GM10248 (cell line): ENCODE measurements at regions of chr3 and their contacts with region 1.

Region 1: DNA sequence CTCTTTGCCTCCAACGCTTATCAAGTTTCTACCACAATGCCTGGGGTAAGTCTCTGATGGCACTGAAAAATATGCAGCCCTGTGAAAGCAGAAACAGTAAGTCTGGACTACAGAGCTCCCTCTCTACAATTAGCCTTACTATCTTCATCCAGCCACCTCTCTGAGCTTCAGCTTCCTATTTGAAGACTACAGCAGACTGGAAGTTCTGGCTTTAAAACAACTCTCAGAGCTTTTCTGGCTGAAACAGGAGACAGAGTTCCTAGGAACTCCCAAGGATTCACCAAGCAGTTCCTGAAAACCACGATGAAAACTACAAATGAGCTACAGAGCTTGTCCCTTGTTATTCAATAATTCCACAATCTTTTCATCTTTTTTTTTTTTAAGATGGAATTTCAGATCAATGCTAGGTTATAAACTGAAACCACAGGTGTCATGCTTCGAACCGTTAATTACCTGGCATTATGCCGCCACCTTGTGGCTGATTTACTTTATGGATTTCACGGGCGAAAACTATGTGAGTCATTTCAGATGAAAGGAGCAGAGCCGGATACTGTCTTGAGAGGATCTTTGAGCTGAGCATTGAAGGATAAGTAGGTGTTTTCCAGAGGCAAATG is 3.9 kb downstream of the CRYGS start:
- DNase-seq: peak; percentile 52
- CTCF ChIP-seq: peak; percentile 70

Region 2: GRCh38 chr3:186217820-186218164 is 322.5 kb before region 1 on chr3:
- CTCF ChIA-PET with region 1: interaction called, 15 read pairs
- POLR2A ChIA-PET with region 1: no interaction called
- DNase-seq: peak; percentile 76
- CTCF ChIP-seq: no peak

Region 3: GRCh38 chr3:186327912-186328487 is 212.3 kb before region 1 on chr3:
- CTCF ChIA-PET with region 1: interaction called, 12 read pairs
- POLR2A ChIA-PET with region 1: no interaction called
- DNase-seq: no peak
- CTCF ChIP-seq: no peak

Region 4: GRCh38 chr3:186493525-186494255 is 46.6 kb before region 1 on chr3:
- CTCF ChIA-PET with region 1: interaction called, 19 read pairs
- POLR2A ChIA-PET with region 1: no interaction called
- DNase-seq: no peak
- CTCF ChIP-seq: no peak

Region 5: GRCh38 chr3:186551387-186551786 is 11.1 kb after region 1 on chr3:
- CTCF ChIA-PET with region 1: interaction called, 46 read pairs
- POLR2A ChIA-PET with region 1: no interaction called
- DNase-seq: no peak
- CTCF ChIP-seq: no peak

Region 6: GRCh38 chr3:186772701-186773424 is 232.5 kb after region 1 on chr3:
- CTCF ChIA-PET with region 1: no interaction called
- POLR2A ChIA-PET with region 1: no interaction called
- DNase-seq: peak; percentile 84
- CTCF ChIP-seq: no peak

Region 7: DNA sequence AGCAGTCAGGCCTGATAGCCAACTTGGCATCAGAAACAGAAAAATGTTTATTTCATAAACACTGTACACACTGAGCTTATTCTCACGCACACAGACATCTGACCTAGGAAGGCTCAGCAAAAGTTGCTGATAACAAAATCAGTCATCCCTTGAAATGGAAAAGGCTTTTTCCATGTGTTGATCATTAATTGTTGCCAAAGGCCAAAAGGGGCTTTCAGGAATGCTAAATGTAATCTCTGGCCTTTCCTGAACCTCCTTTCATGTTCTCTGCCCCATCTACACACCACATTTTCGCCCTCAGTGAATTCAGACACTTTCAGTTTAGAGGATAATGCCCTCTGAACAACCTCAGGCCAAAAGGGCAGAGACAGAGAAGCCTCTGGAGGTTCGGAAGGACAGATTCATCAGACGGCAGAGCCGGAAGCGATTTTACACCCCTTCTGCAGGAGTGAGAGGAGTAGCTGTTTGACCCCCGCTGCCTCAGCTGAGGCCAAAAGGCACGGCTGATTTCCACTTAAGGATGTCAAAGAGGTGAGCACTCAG is 842.4 kb after region 1 on chr3:
- CTCF ChIA-PET with region 1: no interaction called
- POLR2A ChIA-PET with region 1: no interaction called
- DNase-seq: no peak
- CTCF ChIP-seq: no peak